Aorta (tissue), 5 donors: ENCODE measurements at regions of chr7 and their contacts with region 1.

Region 1: DNA sequence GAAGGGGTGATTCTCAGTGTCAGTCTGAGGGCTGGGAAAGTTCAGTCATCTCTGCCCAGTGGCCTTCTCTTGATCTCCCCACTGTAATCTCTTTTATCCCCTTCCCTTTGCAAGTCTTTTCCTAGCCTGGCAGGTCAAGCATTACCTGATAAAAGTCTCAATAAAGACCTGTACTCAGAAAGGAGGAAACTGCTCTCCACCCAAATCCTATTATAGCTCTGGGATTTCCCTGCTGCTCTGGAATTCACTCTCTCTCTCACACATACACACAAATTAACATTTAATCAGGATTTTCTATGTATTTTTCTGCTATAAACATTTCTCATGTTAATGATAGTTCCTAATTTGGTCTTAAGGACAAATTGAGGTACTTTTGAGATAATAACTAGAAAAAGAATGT is 46.5 kb downstream of the ABCA13 start:
- DNase-seq: no peak
- ATAC-seq: no peak
- H3K4me3 ChIP-seq: no peak overlapping the region
- H3K27ac ChIP-seq: no peak overlapping the region
- H3K4me1 ChIP-seq: no peaks in the 10 kb centered on the region
- H3K27me3 ChIP-seq: no peaks in the 10 kb centered on the region

Region 2: GRCh38 chr7:48130658-48131108 is 87.1 kb before region 1 on chr7:
- intact Hi-C with region 1: no loop called
- DNase-seq: no peak
- ATAC-seq: no peak
- H3K4me3 ChIP-seq: no peak overlapping the region
- H3K27ac ChIP-seq: no peak overlapping the region
- H3K4me1 ChIP-seq: no peaks in the 10 kb centered on the region
- H3K27me3 ChIP-seq: no peaks in the 10 kb centered on the region

Region 3: GRCh38 chr7:48269066-48269465 is 51.3 kb after region 1 on chr7:
- intact Hi-C with region 1: loop called in 1 of 2 experiments (anchors 5 kb)
- DNase-seq: no peak
- ATAC-seq: no peak
- H3K4me3 ChIP-seq: no peak overlapping the region
- H3K27ac ChIP-seq: no peak overlapping the region
- H3K4me1 ChIP-seq: no peaks in the 10 kb centered on the region
- H3K27me3 ChIP-seq: no peaks in the 10 kb centered on the region

Region 4: GRCh38 chr7:48312151-48312550 is 94.4 kb after region 1 on chr7:
- intact Hi-C with region 1: no loop called
- DNase-seq: no peak
- ATAC-seq: no peak
- H3K4me3 ChIP-seq: no peak overlapping the region
- H3K27ac ChIP-seq: no peak overlapping the region
- H3K4me1 ChIP-seq: no peaks in the 10 kb centered on the region
- H3K27me3 ChIP-seq: no peaks in the 10 kb centered on the region